Dendritic cell treated with granulocyte-macrophage colony-stimulating factor and Interleukin-4, amounts not matched to agents 40 ng/mL and 50 ng/mL, for 4 days (primary cell): ENCODE measurements at regions of chr15 and their contacts with region 1.

Region 1: GRCh38 chr15:74799856-74800547 is 12.6 kb upstream of the LMAN1L start:
- H3K4me3 Mint-ChIP-seq: no peak overlapping the region
- H3K27ac Mint-ChIP-seq: peak overlapping the region; percentile 77
- H3K4me1 Mint-ChIP-seq: peaks cover 56% of the 10 kb centered on the region
- H3K27me3 Mint-ChIP-seq: no peaks in the 10 kb centered on the region

Region 2: GRCh38 chr15:74787251-74788041 is 12.6 kb before region 1 on chr15:
- intact Hi-C with region 1: loop called (anchors 2 kb)
- H3K4me3 Mint-ChIP-seq: peak overlapping the region; percentile 97
- H3K27ac Mint-ChIP-seq: peak overlapping the region; percentile 93
- H3K4me1 Mint-ChIP-seq: peaks cover 90% of the 10 kb centered on the region
- H3K27me3 Mint-ChIP-seq: no peaks in the 10 kb centered on the region